Activated naive CD4-positive, alpha-beta T cell treated with anti-CD3 and anti-CD28 coated beads for 36 hours (primary cell): ENCODE measurements at regions of chr2 and their contacts with region 1.

Region 1: GRCh38 chr2:202178342-202178958 is 59.9 kb downstream of the SUMO1 start:
- DNase-seq: peak; percentile 78
- H3K4me3 Mint-ChIP-seq: no peak overlapping the region
- H3K27ac Mint-ChIP-seq: no peak overlapping the region
- H3K4me1 Mint-ChIP-seq: no peaks in the 10 kb centered on the region
- H3K27me3 Mint-ChIP-seq: no peaks in the 10 kb centered on the region

Region 2: GRCh38 chr2:201668402-201668910 is 510.0 kb before region 1 on chr2:
- CTCF ChIA-PET with region 1: interaction called, 3 read pairs
- intact Hi-C with region 1: loop called (anchors 5 kb)
- DNase-seq: no peak
- H3K4me3 Mint-ChIP-seq: no peak overlapping the region
- H3K27ac Mint-ChIP-seq: no peak overlapping the region
- H3K4me1 Mint-ChIP-seq: no peaks in the 10 kb centered on the region
- H3K27me3 Mint-ChIP-seq: no peaks in the 10 kb centered on the region

Region 3: GRCh38 chr2:201860636-201861066 is 317.8 kb before region 1 on chr2:
- CTCF ChIA-PET with region 1: interaction called, 57 read pairs
- intact Hi-C with region 1: loop called (anchors 1 kb)
- DNase-seq: peak; percentile 63
- H3K4me3 Mint-ChIP-seq: no peak overlapping the region
- H3K27ac Mint-ChIP-seq: no peak overlapping the region
- H3K4me1 Mint-ChIP-seq: peaks cover 17% of the 10 kb centered on the region
- H3K27me3 Mint-ChIP-seq: peaks cover 10% of the 10 kb centered on the region

Region 4: DNA sequence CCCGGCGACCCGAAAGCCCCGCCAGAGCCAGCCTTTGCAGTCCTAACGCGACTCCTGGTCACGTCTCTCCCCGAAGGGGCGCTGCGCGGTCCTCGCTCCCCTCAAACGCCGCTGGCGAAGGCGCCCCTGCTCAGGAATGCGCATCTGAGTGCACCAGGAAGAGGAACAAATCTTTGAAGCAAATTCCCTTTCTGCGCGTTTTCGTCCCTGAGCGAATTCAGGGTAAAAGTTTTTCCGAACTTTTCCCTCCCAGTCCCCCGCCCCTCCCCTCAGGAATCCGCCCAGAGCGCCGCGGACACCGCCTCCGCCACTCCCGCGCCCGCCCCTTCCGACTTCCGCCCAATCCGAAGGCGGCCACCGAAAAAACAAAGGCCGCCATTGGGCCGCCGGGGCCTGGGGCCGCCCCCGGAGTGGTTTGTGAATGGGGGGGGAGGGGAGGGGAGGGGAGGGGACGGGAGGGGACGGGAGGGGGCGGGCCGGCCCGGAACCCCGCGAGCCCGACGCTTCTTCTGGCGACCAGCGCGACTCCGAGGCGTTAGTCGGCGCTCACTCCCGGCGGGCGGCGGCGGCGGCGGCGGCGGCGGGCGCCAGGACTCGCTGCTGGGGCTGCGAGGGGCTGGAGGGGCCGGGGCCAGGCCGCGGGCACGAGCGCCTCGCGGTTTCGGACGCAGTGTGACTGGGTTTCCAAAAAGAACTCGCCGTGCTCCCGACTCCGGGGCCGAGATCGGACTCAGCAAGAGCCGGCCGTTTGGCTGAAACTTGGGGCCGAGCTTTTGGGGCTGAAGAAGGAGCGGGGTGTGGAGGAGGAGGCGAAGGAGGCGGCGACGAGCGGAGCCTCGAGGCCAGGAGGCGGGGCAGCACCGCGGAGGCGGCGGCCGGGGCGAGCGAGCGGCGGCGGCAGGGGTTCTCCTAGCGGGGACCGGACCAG is 144.9 kb before region 1 on chr2 and contains the start of gene FZD7:
- CTCF ChIA-PET with region 1: no interaction called
- intact Hi-C with region 1: loop called (anchors 2 kb)
- DNase-seq: peak; percentile 90
- H3K4me3 Mint-ChIP-seq: peak within 1 kb of the TSS; percentile 79
- H3K27ac Mint-ChIP-seq: no peak within 1 kb of the TSS
- H3K4me1 Mint-ChIP-seq: peaks cover 12% of the 10 kb centered on the region
- H3K27me3 Mint-ChIP-seq: peaks cover 18% of the 10 kb centered on the region
- total RNA-seq, gene FZD7: 0.17 to 0.43 TPM

Region 5: DNA sequence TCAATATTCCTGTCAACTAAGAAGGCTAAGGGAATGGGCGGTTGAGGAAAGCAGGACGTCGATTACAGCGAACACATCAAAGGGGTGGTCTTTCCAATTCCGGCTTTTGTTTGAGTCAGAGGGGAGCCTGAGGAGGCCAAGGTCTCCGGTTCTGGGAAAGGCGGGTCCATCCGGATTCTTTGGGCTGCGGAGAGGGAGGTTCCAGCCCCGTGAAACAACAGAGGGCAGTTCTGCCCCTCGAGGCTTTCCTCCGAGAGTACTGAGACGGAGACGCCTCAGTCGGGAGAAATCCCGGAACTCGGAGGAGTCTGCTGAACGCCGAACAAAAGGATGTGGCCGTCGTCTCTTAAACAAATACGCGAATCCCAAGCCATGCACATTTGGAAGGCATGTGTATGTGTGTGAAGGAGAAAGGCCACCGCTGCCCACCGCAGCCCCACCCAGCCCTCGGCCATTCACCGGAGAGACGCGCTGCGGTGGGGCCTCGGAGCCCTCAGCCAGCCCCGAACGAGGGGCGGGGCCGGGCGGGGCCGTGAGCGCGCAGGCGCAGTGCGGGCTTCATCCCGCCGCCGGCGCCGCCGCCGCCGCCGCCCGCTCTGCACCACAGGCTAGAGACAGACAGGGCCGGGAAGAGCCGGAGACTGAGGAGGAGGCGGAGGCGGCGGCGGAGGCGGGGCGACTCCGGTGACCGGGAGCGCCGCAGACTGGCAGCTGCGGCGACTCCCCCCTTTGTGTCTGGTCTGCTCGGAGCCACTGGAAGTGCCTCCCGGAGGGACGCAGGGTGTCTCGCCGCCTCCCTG is 197.4 kb after region 1 on chr2 and contains the start of gene BMPR2:
- CTCF ChIA-PET with region 1: no interaction called
- intact Hi-C with region 1: no loop called
- DNase-seq: peak; percentile 79
- H3K4me3 Mint-ChIP-seq: peak within 1 kb of the TSS; percentile 96
- H3K27ac Mint-ChIP-seq: peak within 1 kb of the TSS; percentile 71
- H3K4me1 Mint-ChIP-seq: peaks cover 20% of the 10 kb centered on the region
- H3K27me3 Mint-ChIP-seq: no peaks in the 10 kb centered on the region
- total RNA-seq, gene BMPR2: 4.2 to 5.5 TPM